Mucosa of descending colon (tissue), 3 donors: ENCODE measurements at regions of chr7 and their contacts with region 1.

Region 1: DNA sequence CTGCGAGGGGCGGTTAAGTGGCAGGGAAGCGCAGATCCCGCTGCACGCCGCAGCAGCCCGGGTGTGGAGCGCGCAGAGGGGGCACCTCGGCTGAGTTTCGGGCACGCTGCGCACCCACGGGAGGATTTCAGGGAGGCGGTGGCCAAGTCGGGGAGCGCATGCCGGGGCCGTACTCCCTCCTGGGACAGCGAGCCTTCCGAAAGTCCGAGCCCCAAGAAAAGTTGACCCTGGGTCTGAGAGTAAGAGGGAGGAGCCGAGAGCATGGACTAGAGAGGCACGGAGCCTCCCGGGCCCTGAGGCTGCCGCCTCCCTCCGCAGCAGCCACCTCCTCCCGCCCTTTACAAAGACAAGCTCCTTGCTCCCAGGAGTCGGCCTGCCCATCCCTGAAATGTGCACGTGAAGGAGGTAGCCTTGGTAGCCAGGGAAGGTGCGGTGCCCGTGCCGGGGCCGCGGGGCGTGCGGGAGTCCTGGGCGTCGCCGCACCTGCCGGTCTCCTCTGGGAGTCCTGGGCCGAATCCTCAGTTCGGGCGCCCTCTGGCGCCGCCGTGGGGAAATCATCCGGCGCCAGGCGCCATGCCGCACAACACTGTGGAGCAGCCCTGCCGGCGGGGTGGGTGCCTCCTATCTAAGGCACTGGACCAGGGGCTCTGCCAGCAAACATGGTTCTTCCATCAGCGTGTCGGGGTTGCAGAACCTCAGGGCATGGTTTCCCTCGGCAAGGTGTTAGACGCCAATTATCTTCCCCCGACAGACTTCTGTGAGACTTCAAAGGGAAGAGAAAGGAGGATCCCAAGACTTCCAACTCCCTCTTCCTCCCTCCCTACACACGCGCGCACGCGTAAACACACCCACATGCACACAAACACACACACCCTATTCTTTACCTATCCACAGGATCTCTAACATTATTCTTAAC is 104.0 kb downstream of the TRIL start:
- DNase-seq: peak; percentile 82 to 92 (median 87)
- ATAC-seq: peak; percentile 99
- H3K4me3 ChIP-seq: no peak overlapping the region
- H3K4me1 ChIP-seq: peaks cover 9% of the 10 kb centered on the region
- CTCF ChIP-seq: peak; percentile 72

Region 2: GRCh38 chr7:28389504-28390395 is 464.3 kb before region 1 on chr7:
- intact Hi-C with region 1: loop called (anchors 5 to 10 kb)
- DNase-seq: peak in 1 of 3 donors; percentile 38
- ATAC-seq: no peak
- H3K4me3 ChIP-seq: no peak overlapping the region
- H3K4me1 ChIP-seq: no peaks in the 10 kb centered on the region
- CTCF ChIP-seq: peak; percentile 53

Region 3: DNA sequence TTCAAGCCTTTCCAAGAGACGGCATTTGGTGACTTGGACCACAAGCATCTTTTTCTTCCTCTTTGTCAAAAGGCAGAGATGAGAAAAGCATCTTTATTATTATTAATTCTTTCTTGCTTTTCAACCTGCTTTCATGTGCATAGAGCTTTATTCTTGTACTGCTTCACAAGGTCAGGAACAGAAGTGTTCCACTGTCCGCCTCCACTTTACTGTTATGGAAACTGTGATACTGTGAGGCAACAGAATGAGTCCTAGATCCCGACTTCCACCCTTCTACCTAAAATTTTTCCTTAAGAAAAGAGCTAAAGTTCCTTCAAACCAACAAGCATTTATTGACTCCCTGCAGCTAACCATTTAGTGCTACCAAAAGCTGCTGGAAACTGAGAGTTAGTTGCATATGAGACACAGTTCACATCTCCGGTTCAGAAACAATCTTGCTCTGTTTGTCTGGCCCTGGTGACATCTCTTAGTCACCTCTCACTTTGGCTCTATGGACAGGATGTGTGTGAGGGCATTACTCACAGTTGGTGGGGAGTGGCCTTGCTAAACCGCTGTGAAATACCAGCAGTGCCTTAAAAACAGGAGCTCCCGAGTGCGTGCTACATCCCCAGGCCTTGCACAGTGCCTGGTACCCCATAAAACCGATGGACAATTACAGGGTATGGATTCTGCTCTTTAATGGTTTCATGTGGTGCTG is 181.1 kb after region 1 on chr7:
- intact Hi-C with region 1: no loop called
- DNase-seq: no peak
- ATAC-seq: peak; percentile 31
- H3K4me3 ChIP-seq: no peak overlapping the region
- H3K4me1 ChIP-seq: peaks cover 5% of the 10 kb centered on the region
- CTCF ChIP-seq: no peak

Region 4: DNA sequence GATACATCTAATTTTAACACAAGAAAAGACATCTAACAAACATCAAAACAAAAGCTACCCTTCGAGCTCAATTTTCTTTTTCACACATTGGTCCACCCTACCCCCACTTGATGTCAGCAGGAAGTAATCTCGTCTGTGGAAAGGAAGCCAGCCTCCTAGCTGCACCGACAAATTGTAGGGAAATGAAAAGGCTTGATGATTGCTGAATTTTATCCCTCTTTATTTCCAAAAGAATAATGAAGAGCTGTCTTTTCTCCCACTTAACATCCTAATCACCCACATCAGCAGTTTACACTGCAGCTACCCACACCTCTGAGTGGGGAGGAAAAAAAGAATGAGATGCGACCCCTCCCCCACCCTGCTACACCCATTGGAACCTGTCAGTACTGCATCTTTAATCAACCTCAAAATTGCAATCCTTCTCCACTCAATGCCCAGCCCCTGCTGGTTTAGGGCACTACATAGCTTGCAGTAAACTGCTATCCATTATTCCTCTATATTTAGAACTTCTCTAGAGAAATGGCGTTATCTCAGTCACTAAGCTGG is 302.9 kb after region 1 on chr7:
- intact Hi-C with region 1: no loop called
- DNase-seq: no peak
- ATAC-seq: no peak
- H3K4me3 ChIP-seq: no peak overlapping the region
- H3K4me1 ChIP-seq: no peaks in the 10 kb centered on the region
- CTCF ChIP-seq: no peak